HCT116 (cell line): ENCODE measurements at regions of chr6 and their contacts with region 1.

Region 1: DNA sequence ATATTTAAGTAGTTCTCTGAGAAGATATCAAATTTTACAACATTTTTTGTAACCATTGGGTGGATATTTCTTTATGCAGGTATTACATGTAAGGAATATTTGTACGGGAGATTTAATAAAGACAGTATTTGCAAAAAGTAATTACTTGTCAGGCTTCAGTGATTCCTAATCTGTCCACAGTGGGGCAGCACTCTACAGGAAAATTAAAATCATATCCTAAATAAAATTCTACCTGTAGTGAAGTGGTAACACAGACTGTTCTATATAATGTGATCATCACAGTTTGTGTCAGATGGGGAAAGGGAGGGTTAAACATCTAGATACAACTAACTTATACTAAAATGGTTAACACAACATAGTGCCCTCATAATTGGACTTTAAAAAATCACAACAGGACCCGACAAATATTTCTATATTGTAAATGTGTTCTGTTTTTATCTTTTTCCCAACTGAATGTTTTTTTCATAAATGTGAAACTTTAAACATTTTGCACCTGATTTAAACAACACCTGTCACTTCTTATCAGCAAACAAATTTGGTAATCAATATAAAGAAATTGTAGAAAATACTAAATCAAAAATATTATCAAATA is 145.6 kb upstream of the MANEA start:
- DNase-seq: peak; percentile 23
- ATAC-seq: peak; percentile 46
- H3K4me3 ChIP-seq: no peak overlapping the region
- H3K27ac ChIP-seq: no peak overlapping the region
- H3K4me1 ChIP-seq: no peaks in the 10 kb centered on the region
- H3K27me3 ChIP-seq: no peaks in the 10 kb centered on the region
- CTCF ChIP-seq: peak; percentile 34 to 79 (median 59); a peak in 5 of 6 replicates
- POLR2A ChIP-seq: no peak
- RAD21 ChIP-seq: peak; percentile 69

Region 2: DNA sequence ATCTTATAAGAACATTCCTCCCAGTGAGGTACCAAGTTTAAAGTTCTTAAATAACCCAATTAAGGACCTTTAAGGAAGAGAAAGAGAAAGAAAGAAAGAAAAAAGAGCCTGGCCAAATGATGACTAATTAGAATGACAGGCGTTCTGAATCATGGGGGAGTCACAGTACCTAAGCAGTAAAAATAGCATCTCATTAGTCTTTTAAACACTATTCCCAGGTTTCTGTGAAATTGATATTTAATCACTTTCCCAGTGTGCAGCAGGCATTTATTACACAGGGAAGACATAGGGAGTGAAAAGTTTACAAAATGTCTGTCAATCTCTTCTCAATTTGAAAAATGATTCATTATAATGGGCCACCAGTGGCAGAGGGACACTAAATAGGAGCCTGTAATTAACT is 105.8 kb before region 1 on chr6:
- CTCF ChIA-PET with region 1: no interaction called
- POLR2A ChIA-PET with region 1: no interaction called
- RAD21 ChIA-PET with region 1: no interaction called
- intact Hi-C with region 1: no loop called
- DNase-seq: no peak
- ATAC-seq: no peak
- H3K4me3 ChIP-seq: no peak overlapping the region
- H3K27ac ChIP-seq: no peak overlapping the region
- H3K4me1 ChIP-seq: peaks cover 0 to 8% of the 10 kb centered on the region in 2 experiments; a peak in 2 of 4 replicates
- H3K27me3 ChIP-seq: no peaks in the 10 kb centered on the region
- CTCF ChIP-seq: no peak
- POLR2A ChIP-seq: no peak
- RAD21 ChIP-seq: no peak

Region 3: DNA sequence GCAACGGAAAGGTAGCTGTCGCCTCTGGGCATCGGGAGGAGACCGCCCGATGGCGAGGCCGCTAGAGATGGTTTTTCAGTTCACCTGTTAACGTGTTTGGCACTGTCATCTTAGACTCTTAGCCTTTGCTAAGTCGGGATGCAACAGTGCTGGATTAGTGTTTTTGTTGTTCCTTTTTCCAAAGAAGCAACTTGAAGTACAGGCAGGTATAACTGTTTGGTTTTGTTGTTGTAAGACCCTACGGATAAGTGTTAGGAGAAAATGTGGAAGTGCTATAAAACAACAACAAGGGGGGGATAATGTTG is 146.3 kb after region 1 on chr6:
- CTCF ChIA-PET with region 1: no interaction called
- POLR2A ChIA-PET with region 1: no interaction called
- RAD21 ChIA-PET with region 1: no interaction called
- intact Hi-C with region 1: no loop called
- DNase-seq: no peak
- ATAC-seq: peak; percentile 31
- H3K4me3 ChIP-seq: peak overlapping the region; percentile 63 to 71
- H3K27ac ChIP-seq: peak overlapping the region; percentile 91
- H3K4me1 ChIP-seq: peaks cover 4 to 17% of the 10 kb centered on the region in 2 experiments
- H3K27me3 ChIP-seq: no peaks in the 10 kb centered on the region
- CTCF ChIP-seq: no peak
- POLR2A ChIP-seq: no peak
- RAD21 ChIP-seq: no peak

Region 4: GRCh38 chr6:95866732-95867131 is 435.0 kb after region 1 on chr6:
- CTCF ChIA-PET with region 1: interaction called, 3 read pairs
- POLR2A ChIA-PET with region 1: no interaction called
- RAD21 ChIA-PET with region 1: no interaction called
- intact Hi-C with region 1: loop called (anchors 2 kb)
- DNase-seq: peak; percentile 18
- ATAC-seq: peak; percentile 60
- H3K4me3 ChIP-seq: no peak overlapping the region
- H3K27ac ChIP-seq: no peak overlapping the region
- H3K4me1 ChIP-seq: no peaks in the 10 kb centered on the region
- H3K27me3 ChIP-seq: no peaks in the 10 kb centered on the region
- CTCF ChIP-seq: peak; percentile 27 to 57 (median 42); a peak in 5 of 6 replicates
- POLR2A ChIP-seq: no peak
- RAD21 ChIP-seq: peak; percentile 50

Region 5: DNA sequence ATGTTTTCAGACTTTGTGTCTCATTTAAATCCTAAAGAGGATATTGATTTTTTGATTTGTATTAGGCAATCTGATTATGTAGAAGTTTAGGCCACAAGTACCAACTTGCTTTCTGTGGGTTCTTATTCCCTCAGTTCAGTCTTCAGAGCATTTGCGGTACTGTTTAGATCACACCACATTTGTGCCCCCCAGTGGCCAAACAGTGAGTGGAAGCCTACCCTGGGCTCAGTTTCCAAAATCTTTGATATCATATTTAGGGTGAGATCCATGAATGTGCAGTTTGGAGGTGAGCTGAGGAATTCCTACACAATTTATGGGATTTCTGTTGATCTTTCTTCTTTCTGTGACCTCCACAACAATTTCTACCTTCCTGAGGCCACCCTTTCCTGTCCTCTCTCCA is 491.8 kb after region 1 on chr6:
- CTCF ChIA-PET with region 1: no interaction called
- POLR2A ChIA-PET with region 1: no interaction called
- RAD21 ChIA-PET with region 1: no interaction called
- intact Hi-C with region 1: loop called (anchors 5 kb)
- DNase-seq: peak; percentile 7
- ATAC-seq: peak; percentile 77
- H3K4me3 ChIP-seq: no peak overlapping the region
- H3K27ac ChIP-seq: no peak overlapping the region
- H3K4me1 ChIP-seq: no peaks in the 10 kb centered on the region
- H3K27me3 ChIP-seq: no peaks in the 10 kb centered on the region
- CTCF ChIP-seq: peak in 2 of 3 experiments; percentile 55 to 57; a peak in 4 of 6 replicates
- POLR2A ChIP-seq: no peak
- RAD21 ChIP-seq: peak; percentile 40; the same call in 1 of the 2 replicates

Region 6: GRCh38 chr6:96089173-96089572 is 657.4 kb after region 1 on chr6:
- CTCF ChIA-PET with region 1: interaction called, 5 read pairs
- POLR2A ChIA-PET with region 1: no interaction called
- RAD21 ChIA-PET with region 1: no interaction called
- intact Hi-C with region 1: loop called (anchors 5 kb)
- DNase-seq: peak; percentile 13
- ATAC-seq: peak; percentile 54
- H3K4me3 ChIP-seq: no peak overlapping the region
- H3K27ac ChIP-seq: no peak overlapping the region
- H3K4me1 ChIP-seq: no peaks in the 10 kb centered on the region
- H3K27me3 ChIP-seq: no peaks in the 10 kb centered on the region
- CTCF ChIP-seq: peak; percentile 20 to 57 (median 55); a peak in 5 of 6 replicates
- POLR2A ChIP-seq: no peak
- RAD21 ChIP-seq: peak; percentile 47